Esophagus muscularis mucosa (tissue), 4 donors: ENCODE measurements at regions of chr9 and their contacts with region 1.

Region 1: DNA sequence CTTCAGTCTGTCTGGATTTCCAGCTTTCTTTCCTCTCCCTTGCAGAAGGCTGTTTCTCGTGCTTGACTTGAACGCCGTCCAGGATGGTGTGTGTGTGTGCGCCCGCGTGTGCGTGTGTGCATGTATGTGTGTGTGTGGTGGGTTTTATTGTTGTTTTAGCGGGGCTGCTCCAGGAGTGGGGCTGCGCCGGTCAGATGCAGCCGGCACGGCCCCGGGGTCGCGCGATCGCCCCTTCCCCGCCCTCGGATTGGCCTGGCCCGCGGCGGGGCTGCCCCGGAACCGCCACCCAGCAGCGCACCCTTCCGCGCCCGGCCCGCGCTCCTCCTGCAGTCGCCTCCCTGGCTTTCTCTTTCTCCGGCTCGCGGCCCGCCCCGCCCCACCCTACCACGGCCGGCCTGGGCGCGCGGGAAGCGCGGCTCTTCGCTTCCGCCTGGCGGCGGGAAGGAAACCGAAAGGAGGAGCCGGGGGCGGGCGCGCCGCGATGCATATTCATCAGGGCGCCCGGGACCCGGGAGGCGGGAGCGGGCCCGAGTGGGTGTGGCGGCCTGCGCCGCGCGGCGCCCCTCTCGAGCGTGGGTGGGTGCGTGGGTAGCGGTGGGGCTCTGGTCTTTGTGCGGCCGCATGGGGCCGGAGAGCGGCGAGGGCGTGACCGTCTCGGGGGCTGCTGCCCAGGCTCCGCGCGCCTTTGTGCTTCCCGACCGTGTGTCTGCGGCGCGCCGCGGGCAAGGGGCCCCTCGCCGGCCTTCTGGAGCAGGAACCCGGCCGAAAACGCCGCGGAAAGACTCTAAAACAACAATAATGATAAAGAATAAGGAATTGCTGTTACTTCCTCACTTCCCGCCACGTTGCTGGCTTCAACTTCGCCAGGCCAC is 8.5 kb upstream of the NFIB start:
- DNase-seq: peak; percentile 97
- H3K4me3 ChIP-seq: peak overlapping the region; percentile 71 to 89 (median 85)
- H3K27ac ChIP-seq: peak overlapping the region; percentile 93 to 99 (median 98)
- H3K4me1 ChIP-seq: peaks cover 35 to 62% (median 50%) of the 10 kb centered on the region in 4 donors
- H3K27me3 ChIP-seq: no peaks in the 10 kb centered on the region
- CTCF ChIP-seq: peak; percentile 62 to 81 (median 65)
- EP300 ChIP-seq: no peak
- POLR2A ChIP-seq: no peak

Region 2: DNA sequence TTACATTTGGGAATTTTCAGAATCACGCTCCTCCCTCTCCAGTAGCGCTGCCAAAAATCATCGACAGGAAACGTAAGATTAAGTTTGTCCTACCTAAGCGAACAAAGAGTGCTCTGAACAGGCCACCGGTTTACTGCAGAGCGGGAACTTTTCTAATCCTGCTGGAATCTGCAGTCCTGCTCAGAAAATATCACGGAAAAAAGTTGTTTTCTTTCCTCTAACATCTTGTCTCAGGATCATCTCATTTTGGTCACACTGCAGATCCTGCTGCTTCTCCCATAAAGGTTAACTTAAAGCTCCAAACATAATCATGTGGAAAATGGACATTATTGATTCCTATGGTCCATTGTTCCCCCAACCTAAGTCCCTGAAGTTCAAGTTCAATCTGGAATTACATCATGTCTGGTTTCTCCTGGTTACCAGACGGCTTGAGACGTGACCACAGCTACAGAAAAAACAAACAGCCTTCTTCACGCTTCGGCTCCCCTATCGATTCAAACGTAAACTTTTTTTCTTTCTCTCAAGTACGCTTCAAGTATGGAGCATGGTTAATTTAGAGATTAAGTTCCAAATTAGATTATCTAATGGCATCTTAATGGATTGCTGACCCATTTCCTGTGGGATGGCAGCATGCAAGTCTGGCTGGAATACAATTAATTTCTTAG is 226.1 kb before region 1 on chr9:
- intact Hi-C with region 1: loop called (anchors 5 kb)
- DNase-seq: no peak
- H3K4me3 ChIP-seq: peak overlapping the region; percentile 26 to 40 (median 39)
- H3K27ac ChIP-seq: peak overlapping the region; percentile 58 to 79 (median 74)
- H3K4me1 ChIP-seq: peaks cover 30 to 47% (median 44%) of the 10 kb centered on the region in 4 donors
- H3K27me3 ChIP-seq: no peaks in the 10 kb centered on the region
- CTCF ChIP-seq: no peak
- EP300 ChIP-seq: no peak
- POLR2A ChIP-seq: no peak

Region 3: DNA sequence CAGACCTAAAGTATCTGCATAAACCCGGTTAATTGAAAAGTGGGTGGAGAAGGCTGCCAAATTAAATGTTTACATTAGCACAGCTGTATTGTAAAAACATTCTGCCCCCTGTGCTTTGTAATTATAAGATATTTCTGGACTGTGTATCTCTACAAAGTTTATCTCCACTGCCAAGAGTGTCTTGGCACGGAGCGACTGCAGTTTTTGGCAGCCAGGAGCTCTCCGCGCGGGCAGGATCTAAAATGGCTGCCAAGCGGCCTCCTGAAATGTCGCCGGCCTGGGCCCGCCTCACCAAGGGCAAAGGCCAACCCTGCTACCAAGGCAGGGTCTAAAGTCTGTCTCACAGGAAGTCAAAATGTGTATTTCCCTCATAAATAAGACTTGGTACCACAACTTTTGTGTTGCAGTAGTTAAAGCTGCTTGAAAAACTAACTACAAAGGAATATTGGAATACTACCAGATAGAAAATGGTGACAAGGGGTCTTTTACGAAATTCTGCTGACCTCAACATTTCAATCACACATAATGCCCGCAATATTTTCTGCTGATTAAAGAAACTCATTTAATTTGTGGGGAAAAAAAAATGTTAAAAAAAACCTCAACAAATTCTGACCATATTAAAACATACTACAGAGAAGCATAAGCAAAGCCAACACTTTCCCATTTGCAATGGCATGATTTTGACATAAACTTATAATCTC is 118.9 kb before region 1 on chr9:
- intact Hi-C with region 1: loop called (anchors 5 kb)
- DNase-seq: no peak
- H3K4me3 ChIP-seq: peak overlapping the region in 2 of 4 donors; percentile 21 to 38
- H3K27ac ChIP-seq: peak overlapping the region; percentile 67 to 78 (median 72)
- H3K4me1 ChIP-seq: peaks cover 59 to 86% (median 81%) of the 10 kb centered on the region in 4 donors
- H3K27me3 ChIP-seq: no peaks in the 10 kb centered on the region
- CTCF ChIP-seq: no peak
- EP300 ChIP-seq: no peak
- POLR2A ChIP-seq: no peak